ENCODE measurements at regions of chr11 and their contacts with region 1.

Region 1: DNA sequence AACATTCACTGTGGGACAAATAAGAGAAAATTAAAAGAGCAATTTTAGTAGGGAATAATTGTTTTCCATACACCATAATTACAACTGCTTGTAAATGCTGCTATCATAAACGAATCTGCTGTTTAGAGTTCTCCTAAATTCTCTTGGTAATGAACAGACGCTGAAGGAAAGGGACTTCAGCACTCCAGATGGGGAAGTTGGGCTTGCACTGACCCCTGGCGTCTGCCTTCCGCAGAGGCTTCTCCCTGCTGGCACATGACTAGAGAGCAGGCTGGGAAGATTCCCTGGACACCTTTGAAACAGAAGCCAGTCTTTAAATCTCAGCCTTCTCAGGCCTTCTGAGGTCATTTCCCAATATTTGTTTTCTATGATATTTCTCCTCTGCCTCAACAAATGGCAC is 84.1 kb downstream of the NXPE2 start:
- DNase-seq: peak; percentile 79 to 90 (median 88)
- ATAC-seq: peak; percentile 99
- H3K4me3 ChIP-seq: no peak overlapping the region
- H3K4me1 ChIP-seq: no peaks in the 10 kb centered on the region
- CTCF ChIP-seq: peak; percentile 71

Region 2: DNA sequence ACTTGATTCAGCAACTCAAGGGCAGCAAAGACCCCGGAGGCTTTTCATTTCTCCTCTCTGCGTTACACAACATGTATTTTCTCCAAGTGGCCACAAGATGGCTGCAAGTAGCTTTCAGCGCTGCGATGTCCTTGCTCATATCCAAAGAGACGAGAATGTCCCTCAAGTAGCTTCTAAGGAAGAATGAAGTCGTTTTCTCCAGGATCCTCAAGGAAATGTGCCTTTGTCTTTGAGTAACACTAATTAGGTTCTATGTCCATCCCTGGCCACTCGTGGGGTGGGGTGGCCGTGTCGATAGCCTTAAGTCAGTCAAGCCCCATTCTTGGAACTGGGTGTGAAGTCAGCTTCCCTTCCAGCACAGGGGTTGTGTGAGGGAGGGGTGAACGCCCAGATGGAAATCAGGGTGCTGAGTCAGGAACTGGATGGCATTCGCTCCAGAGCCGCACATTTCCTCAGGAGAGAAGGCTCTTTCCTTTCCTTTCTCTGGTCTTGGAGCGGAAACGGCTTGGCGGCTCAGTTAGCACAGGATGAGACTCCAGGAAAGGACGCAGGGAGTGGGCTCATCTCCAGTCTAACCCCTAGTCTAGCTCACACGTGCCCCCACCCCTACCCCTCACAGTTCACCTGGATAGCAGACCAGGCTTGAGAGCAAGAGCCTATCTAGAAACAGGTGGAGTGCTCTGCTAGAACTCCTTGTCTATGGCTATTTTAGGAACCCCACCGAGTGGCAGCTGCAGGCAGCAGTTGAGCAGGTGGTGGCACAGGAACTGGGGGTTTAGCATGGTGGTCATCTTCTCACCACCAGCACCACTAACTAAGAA is 421.9 kb before region 1 on chr11:
- intact Hi-C with region 1: loop called in 1 of 2 experiments (anchors 5 kb)
- DNase-seq: peak in 2 of 3 donors; percentile 27 to 57
- ATAC-seq: peak; percentile 93
- H3K4me3 ChIP-seq: no peak overlapping the region
- H3K4me1 ChIP-seq: peaks cover 7% of the 10 kb centered on the region
- CTCF ChIP-seq: peak; percentile 45

Region 3: GRCh38 chr11:114448749-114449482 is 313.5 kb before region 1 on chr11:
- intact Hi-C with region 1: no loop called
- DNase-seq: no peak
- ATAC-seq: no peak
- H3K4me3 ChIP-seq: no peak overlapping the region
- H3K4me1 ChIP-seq: no peaks in the 10 kb centered on the region
- CTCF ChIP-seq: no peak

Measured in mucosa of descending colon (tissue), 3 donors.